Right ventricle myocardium superior (tissue), 1 donor: ENCODE measurements at regions of chr15 and their contacts with region 1.

Region 1: GRCh38 chr15:63041974-63042819 is at the start of gene TPM1:
- DNase-seq: peak; percentile 92
- ATAC-seq: peak; percentile 78
- total RNA-seq, gene TPM1: 12,703 TPM

Region 2: DNA sequence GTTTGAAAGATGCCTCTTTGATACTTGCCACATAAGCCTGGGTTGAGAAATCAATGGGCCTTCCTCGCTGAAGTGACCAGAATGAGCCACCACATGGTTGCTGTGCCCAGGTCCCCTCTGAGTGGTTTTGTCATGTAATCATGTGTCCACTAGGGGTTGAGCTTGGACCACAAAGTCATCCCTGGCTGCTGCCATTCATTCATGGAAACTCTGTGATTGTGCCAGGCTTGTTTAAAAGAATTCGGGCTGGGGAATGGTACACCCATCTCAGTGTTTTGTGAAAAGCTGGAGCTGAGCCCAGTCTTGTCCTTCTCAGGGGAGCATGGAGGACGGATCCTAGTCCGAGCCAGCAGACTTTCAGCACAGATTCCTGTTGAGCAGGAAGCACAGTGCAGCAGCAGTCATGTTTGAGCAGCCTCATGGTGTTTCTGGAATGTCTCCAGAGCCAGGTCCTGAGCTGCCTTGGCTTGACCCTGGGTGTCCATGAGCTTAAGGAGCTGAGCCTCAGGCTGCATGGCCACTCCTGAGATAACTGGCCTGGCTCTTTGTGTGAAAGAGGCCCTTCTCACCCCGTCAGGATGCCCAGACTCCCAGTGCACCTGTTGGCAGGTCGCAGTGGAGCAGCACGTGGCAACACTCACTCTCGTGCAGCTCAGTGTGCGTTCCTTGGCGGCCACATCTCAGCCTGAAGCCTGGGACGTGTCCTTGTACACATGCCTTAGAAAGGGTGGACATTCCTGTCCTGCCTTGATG is 260.0 kb before region 1 on chr15:
- intact Hi-C with region 1: loop called (anchors 5 kb)
- DNase-seq: peak; percentile 78
- ATAC-seq: peak; percentile 88

Region 3: DNA sequence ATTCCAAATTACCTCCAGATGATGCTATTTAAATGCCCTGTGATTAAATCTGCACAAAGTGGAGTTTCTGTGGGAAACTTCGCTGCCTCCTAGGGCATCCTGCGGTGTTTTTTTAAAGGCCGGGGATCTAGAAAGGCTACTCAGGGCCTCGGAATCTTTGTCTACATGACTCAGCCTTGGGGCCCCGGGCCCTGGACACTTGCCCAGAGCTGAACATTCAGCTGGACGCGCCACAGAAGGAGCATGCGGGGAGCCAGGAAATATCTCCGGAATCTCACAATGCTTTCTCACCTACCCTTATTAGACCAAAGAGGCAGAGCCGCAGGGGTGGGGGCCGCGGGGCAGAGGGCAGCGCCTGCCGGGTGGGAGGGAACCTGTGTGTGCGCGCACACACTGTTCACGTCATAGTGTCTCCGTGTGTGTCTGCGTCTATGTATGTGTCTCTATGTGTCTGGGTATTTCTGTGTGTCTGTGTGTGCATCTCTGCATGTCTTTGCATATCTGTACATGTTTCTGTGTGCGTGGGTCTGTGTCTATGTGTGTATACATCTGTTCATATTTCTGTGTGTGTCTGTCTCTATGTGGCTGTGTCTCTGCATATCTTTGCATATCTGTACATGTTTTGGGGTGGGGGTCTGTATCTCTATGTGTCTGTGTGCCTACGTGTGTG is 145.1 kb before region 1 on chr15:
- intact Hi-C with region 1: loop called (anchors 5 kb)
- DNase-seq: peak; percentile 90
- ATAC-seq: peak; percentile 77

Region 4: DNA sequence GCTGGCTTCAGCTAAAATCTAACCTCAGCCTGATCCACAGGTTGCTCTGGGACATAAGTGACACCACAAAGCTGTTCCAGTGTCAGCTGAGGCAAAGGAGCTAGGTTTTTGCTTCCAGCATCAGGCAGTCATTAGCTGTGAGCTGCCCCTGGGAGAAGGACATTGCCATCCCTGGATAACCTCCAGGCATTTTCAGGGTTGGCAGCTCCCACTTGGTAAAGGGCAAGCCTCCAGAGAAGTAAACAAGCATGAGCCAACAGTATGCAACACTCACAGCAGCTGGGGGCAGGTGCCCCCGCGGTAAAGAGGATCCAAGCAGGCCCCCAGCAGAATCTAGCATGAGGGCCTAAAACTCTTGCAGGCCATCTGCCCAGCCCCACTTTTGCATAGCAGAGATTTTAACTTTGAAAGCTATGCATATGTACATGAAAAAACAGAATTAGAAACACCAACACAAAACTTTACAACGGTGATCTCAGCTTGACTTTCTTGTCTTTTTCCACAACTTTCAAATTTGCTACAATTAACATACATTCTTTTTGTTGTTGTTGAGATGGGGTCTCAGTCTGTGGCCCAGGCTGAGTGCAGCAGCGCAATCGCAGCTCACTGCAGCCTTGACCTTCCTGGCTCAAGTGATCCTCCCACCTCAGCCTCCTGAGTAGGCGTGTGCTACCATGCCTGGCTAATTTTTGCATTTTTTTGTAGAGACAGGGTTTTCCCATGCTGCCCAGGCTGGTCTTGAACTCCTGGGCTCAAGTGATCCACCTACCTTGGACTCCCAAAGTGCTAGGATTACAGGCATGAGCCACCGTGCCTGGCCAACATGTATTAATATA is 83.5 kb before region 1 on chr15:
- intact Hi-C with region 1: loop called (anchors 5 kb)
- DNase-seq: peak; percentile 55
- ATAC-seq: peak; percentile 88